Activated CD4-positive, alpha-beta memory T cell treated with anti-CD3 and anti-CD28 coated beads for 36 hours (primary cell): ENCODE measurements at regions of chr22 and their contacts with region 1.

Region 1: DNA sequence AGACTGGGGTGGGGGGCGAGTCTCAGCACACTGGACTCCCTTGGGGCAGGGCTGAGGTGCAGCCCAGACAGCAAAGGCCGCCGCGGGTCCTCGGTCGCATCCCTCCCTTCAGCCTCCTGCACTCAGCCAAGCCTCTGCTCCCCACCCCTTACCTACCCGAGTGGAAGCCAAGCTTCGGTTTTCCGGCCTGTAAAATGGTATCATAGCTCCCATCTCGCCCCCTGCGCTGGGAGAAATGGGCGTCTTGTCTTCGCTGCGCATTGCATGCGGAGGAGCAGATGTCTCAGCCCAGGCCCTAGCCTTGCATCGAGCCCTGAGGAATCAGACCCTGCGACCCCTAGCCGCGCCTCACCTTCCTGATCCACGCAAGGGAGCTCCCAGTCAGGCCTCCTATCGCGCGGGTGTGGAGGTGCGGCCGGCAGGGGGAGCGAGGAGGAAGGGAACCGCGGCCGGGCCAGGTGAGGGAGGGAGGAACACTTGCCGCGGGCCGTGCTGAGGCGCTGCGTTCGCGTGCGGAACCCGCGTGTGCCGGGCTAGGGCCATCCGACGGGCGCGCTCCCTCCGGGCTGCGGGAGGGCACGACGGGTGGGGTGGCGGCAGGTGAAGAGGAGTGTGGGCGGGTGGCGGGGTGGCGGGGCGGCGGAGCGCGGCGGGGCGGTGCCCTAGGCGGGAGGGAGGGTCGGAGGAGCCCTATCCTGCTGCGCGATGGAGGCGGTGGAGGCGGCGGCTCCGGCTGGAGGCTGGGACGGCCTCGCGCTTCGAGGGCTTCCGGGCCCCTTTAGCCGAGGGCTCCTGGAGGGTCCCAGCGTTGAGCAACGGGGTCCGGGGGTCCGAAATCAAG is 4.1 kb upstream of the TBX1 start:
- DNase-seq: peak; percentile 78
- H3K4me3 Mint-ChIP-seq: peak overlapping the region; percentile 16
- H3K27ac Mint-ChIP-seq: no peak overlapping the region
- H3K4me1 Mint-ChIP-seq: peaks cover 28% of the 10 kb centered on the region
- H3K27me3 Mint-ChIP-seq: peaks cover 57% of the 10 kb centered on the region

Region 2: GRCh38 chr22:19745155-19746101 is 11.1 kb before region 1 on chr22:
- CTCF ChIA-PET with region 1: no interaction called
- POLR2A ChIA-PET with region 1: no interaction called
- intact Hi-C with region 1: no loop called
- DNase-seq: no peak
- H3K4me3 Mint-ChIP-seq: no peak overlapping the region
- H3K27ac Mint-ChIP-seq: no peak overlapping the region
- H3K4me1 Mint-ChIP-seq: no peaks in the 10 kb centered on the region
- H3K27me3 Mint-ChIP-seq: no peaks in the 10 kb centered on the region

Region 3: GRCh38 chr22:19766511-19767426 is 10.3 kb after region 1 on chr22:
- CTCF ChIA-PET with region 1: interaction called, 3 read pairs
- POLR2A ChIA-PET with region 1: no interaction called
- intact Hi-C with region 1: loop called (anchors 1 kb)
- DNase-seq: peak; percentile 70
- H3K4me3 Mint-ChIP-seq: peak overlapping the region; percentile 29
- H3K27ac Mint-ChIP-seq: no peak overlapping the region
- H3K4me1 Mint-ChIP-seq: peaks cover 6% of the 10 kb centered on the region
- H3K27me3 Mint-ChIP-seq: peaks cover 65% of the 10 kb centered on the region

Region 4: GRCh38 chr22:19891317-19892256 is 135.1 kb after region 1 on chr22:
- CTCF ChIA-PET with region 1: interaction called, 3 read pairs
- POLR2A ChIA-PET with region 1: no interaction called
- intact Hi-C with region 1: loop called (anchors 5 kb)
- DNase-seq: peak; percentile 90
- H3K4me3 Mint-ChIP-seq: peak overlapping the region; percentile 69
- H3K27ac Mint-ChIP-seq: peak overlapping the region; percentile 95
- H3K4me1 Mint-ChIP-seq: peaks cover 56% of the 10 kb centered on the region
- H3K27me3 Mint-ChIP-seq: no peaks in the 10 kb centered on the region

Region 5: GRCh38 chr22:19909350-19910179 is 153.1 kb after region 1 on chr22:
- CTCF ChIA-PET with region 1: interaction called, 14 read pairs
- POLR2A ChIA-PET with region 1: no interaction called
- intact Hi-C with region 1: no loop called
- DNase-seq: peak; percentile 88
- H3K4me3 Mint-ChIP-seq: no peak overlapping the region
- H3K27ac Mint-ChIP-seq: peak overlapping the region; percentile 38
- H3K4me1 Mint-ChIP-seq: peaks cover 4% of the 10 kb centered on the region
- H3K27me3 Mint-ChIP-seq: no peaks in the 10 kb centered on the region